ENCODE measurements at regions of chr14 and their contacts with region 1.

Region 1: DNA sequence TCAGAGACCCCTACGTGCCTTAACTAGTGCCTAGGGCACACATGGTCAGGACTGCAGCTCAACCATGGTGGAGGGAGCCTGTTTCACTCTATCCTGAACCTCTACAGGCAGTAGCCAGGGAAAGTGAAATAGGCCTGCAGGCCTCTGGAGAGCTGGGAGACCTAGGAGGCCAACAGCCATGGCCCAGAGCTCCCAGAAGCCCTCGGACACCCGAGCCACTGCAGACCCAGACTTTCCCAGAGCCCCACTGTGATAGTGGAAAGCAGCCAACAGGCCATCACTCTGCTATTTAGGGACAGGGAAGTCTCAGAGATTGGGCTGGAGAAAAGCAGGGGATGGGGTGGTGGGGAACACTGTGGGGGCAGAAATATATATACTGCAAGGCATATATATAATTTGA is 56.5 kb upstream of the ZFP36L1 start:
- DNase-seq: no peak
- H3K4me3 Mint-ChIP-seq: no peak overlapping the region
- H3K27ac Mint-ChIP-seq: no peak overlapping the region
- H3K4me1 Mint-ChIP-seq: peaks cover 13% of the 10 kb centered on the region
- H3K27me3 Mint-ChIP-seq: no peaks in the 10 kb centered on the region
- CTCF ChIP-seq: no peak

Region 2: GRCh38 chr14:67837011-67837624 is 1012.3 kb before region 1 on chr14:
- CTCF ChIA-PET with region 1: no interaction called
- intact Hi-C with region 1: loop called (anchors 2 kb)
- DNase-seq: peak; percentile 66
- H3K4me3 Mint-ChIP-seq: no peak overlapping the region
- H3K27ac Mint-ChIP-seq: no peak overlapping the region
- H3K4me1 Mint-ChIP-seq: no peaks in the 10 kb centered on the region
- H3K27me3 Mint-ChIP-seq: no peaks in the 10 kb centered on the region
- CTCF ChIP-seq: peak; percentile 39

Measured in Calu3 (cell line).